ENCODE measurements at regions of chr3 and their contacts with region 1.

Region 1: DNA sequence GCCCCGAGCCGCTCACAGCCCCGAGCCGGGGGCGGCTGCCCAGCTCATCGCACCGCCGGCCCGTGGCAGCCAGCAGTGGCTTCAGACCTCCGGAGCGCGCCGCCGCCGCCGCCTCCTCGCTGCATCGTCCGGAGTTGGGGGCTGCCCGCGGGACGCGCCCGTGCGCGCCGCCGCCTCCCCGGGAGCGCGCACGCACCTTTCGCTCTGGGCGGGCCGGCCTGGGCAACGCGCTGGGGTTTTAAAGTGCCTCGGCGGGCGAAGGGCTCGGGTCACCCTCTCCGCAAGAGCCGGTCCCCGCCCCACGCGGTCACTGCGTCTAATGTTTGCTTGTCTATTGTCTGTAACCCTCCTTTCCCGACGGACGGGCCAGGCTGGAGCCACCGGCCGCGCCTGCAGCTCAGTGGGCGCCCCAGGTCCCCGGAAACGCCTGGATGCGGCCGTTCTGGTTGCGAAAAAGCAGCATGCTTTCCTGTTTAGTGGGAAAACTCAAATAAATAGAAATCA is at the start of gene RYK:
- DNase-seq: peak; percentile 74
- H3K4me3 ChIP-seq: peak within 1 kb of the TSS; percentile 74 to 77
- H3K27ac ChIP-seq: peak within 1 kb of the TSS; percentile 90 to 93
- H3K4me1 ChIP-seq: no peaks in the 10 kb centered on the region
- H3K27me3 ChIP-seq: no peaks in the 10 kb centered on the region
- CTCF ChIP-seq: no peak
- POLR2A ChIP-seq: peak; percentile 77
- total RNA-seq, gene RYK: 61.6 to 95.8 TPM

Region 2: GRCh38 chr3:134299185-134299887 is 48.6 kb after region 1 on chr3:
- intact Hi-C with region 1: loop called (anchors 5 kb)
- DNase-seq: no peak
- H3K4me3 ChIP-seq: no peak overlapping the region
- H3K27ac ChIP-seq: no peak overlapping the region
- H3K4me1 ChIP-seq: no peaks in the 10 kb centered on the region
- H3K27me3 ChIP-seq: no peaks in the 10 kb centered on the region
- CTCF ChIP-seq: peak in 3 of 4 experiments; percentile 39 to 64 (median 56)
- POLR2A ChIP-seq: no peak